Mucosa of descending colon (tissue), 3 donors: ENCODE measurements at regions of chr16 and their contacts with region 1.

Region 1: GRCh38 chr16:68328151-68328859 is 17.5 kb downstream of the PRMT7 start:
- DNase-seq: peak; percentile 67 to 87 (median 78)
- ATAC-seq: peak; percentile 99
- H3K4me3 ChIP-seq: no peak overlapping the region
- H3K4me1 ChIP-seq: no peaks in the 10 kb centered on the region
- CTCF ChIP-seq: peak; percentile 77

Region 2: DNA sequence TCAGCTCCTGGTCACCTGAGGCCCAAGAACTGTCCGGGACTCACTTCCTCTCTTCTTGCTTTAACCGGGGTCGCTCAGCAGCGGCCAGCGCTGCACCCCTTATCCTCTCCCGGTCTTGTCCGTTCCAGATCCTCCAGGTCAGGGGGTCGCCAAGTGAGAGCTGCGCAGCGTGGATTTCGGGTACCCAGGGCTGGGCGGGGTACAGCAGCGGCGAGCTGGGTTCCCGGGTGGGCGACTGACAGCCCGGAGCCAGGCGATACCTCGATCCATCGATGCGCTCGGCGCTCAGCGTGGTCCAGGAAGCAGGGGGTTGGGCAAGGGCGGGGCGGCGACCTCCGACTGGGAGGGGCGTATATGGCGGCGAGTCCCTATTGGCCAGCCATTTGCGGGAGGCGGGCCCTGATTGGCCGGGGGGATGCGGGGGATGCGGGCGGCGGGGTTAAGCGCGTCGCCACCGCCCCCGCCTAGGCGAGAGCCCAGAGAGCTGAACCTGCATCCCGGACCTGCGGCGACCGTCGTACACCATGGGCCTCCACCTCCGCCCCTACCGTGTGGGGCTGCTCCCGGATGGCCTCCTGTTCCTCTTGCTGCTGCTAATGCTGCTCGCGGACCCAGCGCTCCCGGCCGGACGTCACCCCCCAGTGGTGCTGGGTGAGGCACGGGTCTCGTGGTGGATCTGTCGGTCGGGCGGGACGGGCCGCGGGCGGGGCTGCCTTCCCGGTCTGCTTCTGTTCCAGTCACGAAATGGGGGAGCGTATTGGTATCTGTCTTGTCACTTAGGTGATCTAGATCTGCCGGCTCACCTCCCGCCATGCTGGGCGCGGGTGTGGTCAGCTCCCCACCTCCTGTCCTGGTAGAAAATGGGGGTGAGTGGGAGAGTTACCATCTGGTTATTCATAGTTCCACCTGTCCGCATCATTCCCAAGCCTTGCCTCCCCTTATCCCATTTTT is 83.1 kb before region 1 on chr16 and contains the start of gene PLA2G15:
- intact Hi-C with region 1: loop called in 1 of 2 experiments (anchors 5 kb)
- DNase-seq: peak; percentile 97 to 99 (median 99)
- ATAC-seq: peak; percentile 98
- H3K4me3 ChIP-seq: peak within 1 kb of the TSS; percentile 64
- H3K4me1 ChIP-seq: peaks cover 19% of the 10 kb centered on the region
- CTCF ChIP-seq: no peak
- total RNA-seq, gene PLA2G15: 13.2 to 14.2 (median 13.5) TPM

Region 3: GRCh38 chr16:68264128-68265077 is 63.9 kb before region 1 on chr16 and contains the start of gene SLC7A6:
- intact Hi-C with region 1: loop called (anchors 2 to 5 kb)
- DNase-seq: peak; percentile 81 to 88 (median 87)
- ATAC-seq: peak; percentile 79
- H3K4me3 ChIP-seq: peak within 1 kb of the TSS; percentile 64
- H3K4me1 ChIP-seq: peaks cover 36% of the 10 kb centered on the region
- CTCF ChIP-seq: peak; percentile 78
- total RNA-seq, gene SLC7A6: 35.0 to 41.4 (median 37.2) TPM